Activated T-helper 1 cell treated with anti-CD3 and anti-CD28 coated beads, Interleukin-12 subunit alpha, Interleukin-12 subunit beta, Interleukin-2, Interleukin-4 antibody, amounts not matched to agents 30 ng/mL and 10 ng/mL and 1 ng/mL, durations not matched to agents 14 hours and 24 hours and 36 hours (primary cell): ENCODE measurements at regions of chr2 and their contacts with region 1.

Region 1: DNA sequence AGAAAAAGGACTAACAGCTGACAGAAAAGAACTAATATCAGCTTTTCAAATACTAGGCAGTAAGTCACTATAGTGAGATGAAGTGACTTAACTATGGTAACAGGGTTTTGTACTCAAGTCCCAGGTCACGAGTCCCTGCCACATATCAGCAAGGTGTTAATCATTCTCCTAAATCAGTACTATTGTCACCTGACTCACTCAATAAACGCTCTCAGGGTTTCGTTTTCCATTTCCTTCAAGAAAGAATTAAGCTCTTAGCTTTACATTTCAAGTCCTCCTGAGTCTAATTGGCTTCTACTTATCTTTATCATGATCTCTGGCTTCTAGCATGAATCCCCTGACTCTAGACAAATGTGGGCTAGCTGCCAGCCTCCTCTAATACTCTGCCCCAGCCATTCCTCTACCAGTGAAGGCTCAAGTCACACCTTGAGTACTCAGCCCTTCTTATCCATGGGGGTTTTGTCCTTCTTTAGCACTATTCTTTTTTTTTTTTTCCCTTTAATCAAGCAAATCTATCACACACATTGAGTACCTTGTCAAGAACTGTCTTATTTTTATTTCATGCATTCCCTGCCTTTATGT is 20.0 kb downstream of the BUB1 start:
- DNase-seq: no peak
- H3K4me3 Mint-ChIP-seq: no peak overlapping the region
- H3K27ac Mint-ChIP-seq: no peak overlapping the region
- H3K4me1 Mint-ChIP-seq: peaks cover 21% of the 10 kb centered on the region
- H3K27me3 Mint-ChIP-seq: no peaks in the 10 kb centered on the region

Region 2: GRCh38 chr2:109644576-109645275 is 1013.1 kb before region 1 on chr2:
- intact Hi-C with region 1: no loop called
- DNase-seq: no peak
- H3K4me3 Mint-ChIP-seq: no peak overlapping the region
- H3K27ac Mint-ChIP-seq: no peak overlapping the region
- H3K4me1 Mint-ChIP-seq: no peaks in the 10 kb centered on the region
- H3K27me3 Mint-ChIP-seq: no peaks in the 10 kb centered on the region

Region 3: DNA sequence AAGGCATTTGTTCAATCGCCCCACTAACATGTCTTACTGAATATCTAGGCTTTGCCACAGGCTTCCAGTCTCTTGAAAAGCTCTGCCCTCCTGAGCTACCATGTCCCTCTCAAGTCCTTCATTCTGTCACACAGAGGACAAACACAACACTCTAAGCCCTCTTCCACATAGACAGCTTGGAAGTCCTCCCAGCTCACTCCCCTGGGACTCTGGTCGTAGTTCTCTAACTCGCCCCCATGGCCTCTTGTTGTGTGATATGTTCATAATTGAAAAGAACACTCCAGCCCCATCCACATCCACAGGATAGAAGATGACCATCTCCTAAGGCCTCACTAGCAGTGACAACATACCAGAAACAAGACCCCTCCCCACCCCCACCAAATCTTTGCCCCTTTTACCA is 17.8 kb before region 1 on chr2:
- intact Hi-C with region 1: no loop called
- DNase-seq: no peak
- H3K4me3 Mint-ChIP-seq: no peak overlapping the region
- H3K27ac Mint-ChIP-seq: no peak overlapping the region
- H3K4me1 Mint-ChIP-seq: no peaks in the 10 kb centered on the region
- H3K27me3 Mint-ChIP-seq: no peaks in the 10 kb centered on the region

Region 4: DNA sequence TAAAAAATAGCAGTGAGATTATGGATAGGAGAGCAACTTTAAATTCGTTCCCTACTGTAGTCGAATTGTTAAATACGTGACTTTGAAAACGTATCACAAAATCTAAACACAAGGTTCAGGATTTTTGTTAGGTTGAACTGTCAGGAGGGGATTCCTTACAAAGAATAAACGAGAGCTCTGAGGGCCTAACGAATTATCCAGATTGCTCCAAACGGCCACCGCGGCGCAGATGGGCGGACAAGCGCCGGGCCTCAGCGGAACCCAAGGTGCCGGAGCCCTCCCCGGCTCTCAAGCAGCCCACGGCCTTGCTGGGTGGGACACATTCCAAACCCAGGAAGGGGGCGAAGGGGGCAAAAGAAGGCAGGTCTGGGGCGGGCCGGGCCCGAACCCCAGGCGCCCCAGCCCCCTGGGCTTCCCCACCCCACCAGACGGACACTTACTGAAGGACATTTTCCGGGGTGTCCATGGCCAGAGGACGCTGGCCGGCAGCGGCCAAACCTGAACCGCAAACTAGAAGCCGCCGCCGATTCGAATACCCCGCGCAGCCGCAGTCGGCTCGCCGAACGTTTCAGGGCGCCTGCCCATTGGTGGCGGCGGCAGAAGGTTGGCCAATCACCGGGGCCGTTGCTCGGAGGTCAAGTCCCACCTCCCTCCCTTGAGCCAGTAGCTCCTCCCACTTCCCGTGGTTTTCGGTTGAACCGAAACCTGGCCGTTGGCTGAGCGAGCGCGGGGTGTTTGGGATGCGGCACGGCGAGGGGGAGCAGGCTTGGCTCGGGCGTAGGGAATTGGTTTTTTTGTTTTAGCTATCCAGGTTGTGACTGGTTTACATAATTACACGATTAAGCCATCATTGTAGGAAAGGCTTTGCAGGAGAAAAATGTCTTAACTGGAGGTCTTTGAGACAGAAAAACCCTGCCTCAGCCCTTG is 20.0 kb after region 1 on chr2 and contains the start of gene BUB1:
- intact Hi-C with region 1: loop called (anchors 2 kb)
- DNase-seq: peak; percentile 96
- H3K4me3 Mint-ChIP-seq: peak within 1 kb of the TSS; percentile 84
- H3K27ac Mint-ChIP-seq: peak within 1 kb of the TSS; percentile 88
- H3K4me1 Mint-ChIP-seq: peaks cover 57% of the 10 kb centered on the region
- H3K27me3 Mint-ChIP-seq: peaks cover 5% of the 10 kb centered on the region
- total RNA-seq, gene BUB1: 56.1 and 61.9 TPM in 2 replicates